A549 (cell line): ENCODE measurements at regions of chr9 and their contacts with region 1.

Region 1: GRCh38 chr9:101628173-101628572 is 33.4 kb upstream of the PPP3R2 start:
- DNase-seq: no peak
- ATAC-seq: no peak
- H3K4me3 ChIP-seq: no peak overlapping the region
- H3K27ac ChIP-seq: no peak overlapping the region
- H3K4me1 ChIP-seq: no peaks in the 10 kb centered on the region
- CTCF ChIP-seq: no peak
- EP300 ChIP-seq: no peak
- POLR2A ChIP-seq: no peak
- RAD21 ChIP-seq: no peak

Region 2: DNA sequence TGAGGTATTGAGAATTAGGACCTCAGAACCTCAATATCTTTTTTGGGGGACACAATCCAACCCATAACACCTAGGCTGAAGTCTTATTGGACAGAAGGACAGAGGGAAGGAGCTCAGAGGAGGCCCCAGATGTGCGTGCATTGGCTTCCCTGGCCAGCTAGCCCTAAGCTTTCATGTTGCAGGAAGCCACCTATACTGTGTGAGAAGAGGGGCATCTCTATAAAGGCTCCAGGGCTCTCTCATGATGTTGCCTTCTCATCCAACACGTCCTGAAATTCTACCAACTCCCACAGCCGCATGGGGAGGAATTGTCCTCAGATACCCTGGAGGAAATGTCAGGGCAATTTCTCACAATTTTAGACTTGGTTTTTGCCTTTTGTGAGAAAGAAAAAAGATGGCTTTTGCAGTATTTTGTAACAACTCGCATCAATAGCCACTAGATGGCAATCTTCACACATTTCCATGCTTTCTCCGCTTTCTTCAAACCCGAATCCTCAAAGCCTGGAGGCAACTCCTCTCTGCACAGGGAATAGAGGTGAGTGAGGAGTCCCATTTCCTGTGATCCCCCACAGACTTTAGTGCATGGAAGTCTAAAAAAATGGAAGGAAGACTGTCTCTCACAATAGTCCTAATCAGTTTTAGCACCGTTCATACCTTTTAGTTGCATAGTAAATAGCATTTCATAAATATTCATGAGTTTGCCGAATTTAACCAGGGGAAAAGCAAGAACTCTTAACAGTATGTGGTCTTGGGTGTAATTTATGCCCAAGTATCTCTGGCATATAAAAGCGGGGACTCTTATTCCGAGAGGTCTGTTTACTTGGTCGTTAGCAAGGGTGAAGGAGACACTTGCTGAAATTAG is 26.0 kb before region 1 on chr9:
- CTCF ChIA-PET with region 1: interaction called, 10 read pairs
- POLR2A ChIA-PET with region 1: no interaction called
- DNase-seq: peak; percentile 47 to 53
- ATAC-seq: peak; percentile 80 to 89; a peak in 5 of 6 replicates
- H3K4me3 ChIP-seq: no peak overlapping the region
- H3K27ac ChIP-seq: no peak overlapping the region
- H3K4me1 ChIP-seq: no peaks in the 10 kb centered on the region
- CTCF ChIP-seq: peak; percentile 78
- EP300 ChIP-seq: no peak
- POLR2A ChIP-seq: no peak
- RAD21 ChIP-seq: peak; percentile 75 to 79